Prostate gland (tissue), 2 donors: ENCODE measurements at regions of chr3 and their contacts with region 1.

Region 1: DNA sequence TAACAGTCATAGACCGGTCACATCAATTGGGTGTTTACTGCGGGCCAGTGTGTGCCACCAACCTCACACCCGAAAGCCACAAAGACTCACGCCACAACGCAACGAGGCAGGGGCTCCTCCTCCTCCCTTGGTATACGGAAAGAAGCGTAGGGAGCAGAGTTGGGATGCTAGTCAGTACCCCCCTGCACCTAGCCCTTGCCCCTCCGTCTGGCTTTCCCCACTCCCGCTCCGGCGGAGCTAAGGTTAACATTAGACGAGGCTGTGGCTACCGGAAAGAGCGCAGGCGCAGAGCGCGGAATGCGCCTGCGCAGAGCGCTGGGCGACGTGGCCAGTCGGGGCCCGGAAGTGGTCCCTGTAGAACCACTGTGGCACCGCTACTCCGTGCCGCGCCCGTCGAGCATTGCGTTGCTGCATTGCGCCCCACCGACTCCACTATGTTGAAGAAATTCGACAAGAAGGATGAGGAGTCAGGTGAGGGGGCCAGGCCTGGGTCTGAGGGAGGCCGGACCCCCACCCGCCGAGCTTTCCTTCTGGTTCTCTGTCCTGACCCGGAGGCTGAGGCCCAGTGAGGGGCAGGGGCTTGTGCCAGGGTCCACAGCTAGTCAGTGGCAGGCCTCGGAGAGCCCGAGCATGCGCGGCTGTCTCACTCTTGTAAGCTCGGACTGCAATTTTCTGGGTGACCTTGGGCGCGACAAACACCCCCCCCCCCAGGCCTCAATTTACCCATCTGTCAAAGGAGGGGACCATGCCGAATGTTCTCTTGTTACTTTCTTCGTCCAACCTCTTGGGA is at the start of gene COPG1:
- DNase-seq: peak; percentile 77
- H3K4me3 ChIP-seq: peak within 1 kb of the TSS; percentile 68 to 98
- H3K27ac ChIP-seq: peak within 1 kb of the TSS; percentile 81 to 85
- H3K4me1 ChIP-seq: peaks cover 7% of the 10 kb centered on the region
- H3K27me3 ChIP-seq: no peaks in the 10 kb centered on the region
- CTCF ChIP-seq: peak in 1 of 4 experiments; percentile 29
- POLR2A ChIP-seq: peak; percentile 95
- total RNA-seq, gene COPG1: 143 to 220 TPM

Region 2: DNA sequence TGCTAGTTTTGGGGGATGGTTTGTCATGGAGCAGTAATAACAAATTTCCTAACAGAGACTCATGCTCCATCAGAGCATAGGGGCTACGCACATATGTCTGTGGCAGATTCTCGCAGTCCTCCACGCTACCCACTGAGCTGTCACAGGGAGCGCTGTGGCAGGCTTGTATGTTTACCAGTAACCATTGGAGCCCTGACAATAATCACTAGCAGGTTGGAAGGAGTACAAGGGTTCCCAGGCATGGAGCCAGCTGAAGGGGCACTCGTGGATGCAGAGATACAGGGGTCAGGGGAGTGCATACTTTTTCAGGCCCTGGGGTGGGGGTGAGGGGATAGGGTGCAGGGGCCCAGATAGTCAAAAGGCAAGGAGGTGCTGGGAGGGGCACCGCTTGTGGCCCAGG is 196.8 kb before region 1 on chr3:
- intact Hi-C with region 1: loop called (anchors 2 kb)
- DNase-seq: no peak
- H3K4me3 ChIP-seq: no peak overlapping the region
- H3K27ac ChIP-seq: peak overlapping the region; percentile 58 to 62
- H3K4me1 ChIP-seq: peaks cover 7% of the 10 kb centered on the region
- H3K27me3 ChIP-seq: no peaks in the 10 kb centered on the region
- CTCF ChIP-seq: no peak
- POLR2A ChIP-seq: no peak

Region 3: DNA sequence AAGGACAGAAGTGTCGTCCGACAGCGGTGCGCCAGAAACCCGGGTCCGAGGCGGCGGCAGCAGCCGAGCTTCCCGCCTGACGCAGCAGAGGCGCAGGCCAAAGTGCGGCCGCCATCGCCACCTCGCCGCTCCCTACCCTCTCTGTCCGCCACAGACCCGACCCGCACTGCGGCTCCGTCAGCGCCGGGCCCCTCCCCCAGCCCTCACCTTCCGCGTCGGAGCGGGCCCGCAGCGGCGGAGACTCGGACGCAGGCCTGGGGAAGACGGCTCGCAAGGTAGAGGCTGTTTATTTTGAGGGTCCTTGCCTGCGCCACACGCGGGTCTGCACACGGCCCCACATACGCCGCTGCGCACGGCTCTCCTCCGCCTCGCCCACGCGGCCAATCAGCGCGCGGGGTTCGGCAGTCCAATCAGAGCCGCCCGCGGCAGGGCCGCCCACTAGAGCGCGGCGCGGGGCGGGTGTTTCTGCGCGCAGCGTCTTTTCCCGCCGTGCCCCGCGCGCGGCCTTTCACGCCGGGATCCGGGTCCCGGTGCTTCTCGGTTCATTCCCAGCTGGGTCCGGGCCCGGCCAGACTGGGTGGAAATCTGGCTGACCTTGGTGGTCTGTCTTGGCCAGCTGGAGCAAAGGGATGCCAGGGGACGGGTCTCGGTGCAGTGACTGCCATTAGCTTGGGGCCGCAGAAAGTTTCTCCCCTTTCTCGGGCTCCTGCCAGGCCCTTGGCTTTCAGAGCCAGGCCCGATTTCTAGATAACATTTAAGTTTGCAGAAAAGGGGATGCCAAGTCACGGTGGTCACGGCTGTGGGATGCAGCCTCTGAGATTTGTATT is 65.7 kb before region 1 on chr3 and contains the start of gene CNBP:
- intact Hi-C with region 1: loop called (anchors 5 kb)
- DNase-seq: peak; percentile 92
- H3K4me3 ChIP-seq: peak within 1 kb of the TSS; percentile 74 to 98
- H3K27ac ChIP-seq: peak within 1 kb of the TSS; percentile 96 to 98
- H3K4me1 ChIP-seq: peaks cover 18% of the 10 kb centered on the region
- H3K27me3 ChIP-seq: no peaks in the 10 kb centered on the region
- CTCF ChIP-seq: peak in 1 of 4 experiments; percentile 25
- POLR2A ChIP-seq: peak; percentile 98
- total RNA-seq, gene CNBP: 339 to 523 TPM

Region 4: DNA sequence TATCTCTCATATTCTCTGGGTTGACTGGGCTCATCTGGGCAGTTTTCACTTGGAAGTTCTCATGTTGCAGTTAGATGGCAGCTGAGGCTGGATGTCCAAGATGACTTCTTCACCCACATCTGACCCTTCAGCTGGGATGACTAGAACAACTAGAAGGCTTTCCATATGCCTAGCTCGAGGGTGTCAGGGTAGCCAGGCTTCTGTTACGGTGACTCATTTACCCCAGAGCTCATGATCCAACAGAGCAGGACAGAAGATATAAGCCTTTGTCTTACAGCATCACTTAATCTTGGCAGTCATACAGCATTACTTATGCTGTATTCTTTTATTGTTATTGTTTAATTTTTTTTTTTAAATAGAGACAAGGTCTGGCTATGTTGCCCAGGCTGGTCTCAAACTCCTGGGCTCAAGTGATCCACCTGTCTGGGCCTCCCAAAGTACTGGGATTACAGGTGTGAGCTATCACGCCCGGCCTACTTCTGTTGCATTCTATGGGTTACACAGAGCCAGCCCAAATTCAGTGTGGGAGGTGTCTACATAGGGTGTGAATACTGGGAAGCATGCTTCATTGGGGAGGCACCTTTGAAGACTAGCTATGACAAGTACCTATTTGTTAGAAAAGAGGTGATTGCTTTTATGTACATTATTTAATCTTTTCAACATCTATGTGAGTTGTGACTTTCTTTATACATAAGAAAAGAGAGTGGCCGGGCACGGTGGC is 39.9 kb after region 1 on chr3:
- intact Hi-C with region 1: no loop called
- DNase-seq: no peak
- H3K4me3 ChIP-seq: no peak overlapping the region
- H3K27ac ChIP-seq: no peak overlapping the region
- H3K4me1 ChIP-seq: no peaks in the 10 kb centered on the region
- H3K27me3 ChIP-seq: no peaks in the 10 kb centered on the region
- CTCF ChIP-seq: no peak
- POLR2A ChIP-seq: no peak